Right ventricle myocardium inferior (tissue), 1 donor: ENCODE measurements at regions of chr1 and their contacts with region 1.

Region 1: DNA sequence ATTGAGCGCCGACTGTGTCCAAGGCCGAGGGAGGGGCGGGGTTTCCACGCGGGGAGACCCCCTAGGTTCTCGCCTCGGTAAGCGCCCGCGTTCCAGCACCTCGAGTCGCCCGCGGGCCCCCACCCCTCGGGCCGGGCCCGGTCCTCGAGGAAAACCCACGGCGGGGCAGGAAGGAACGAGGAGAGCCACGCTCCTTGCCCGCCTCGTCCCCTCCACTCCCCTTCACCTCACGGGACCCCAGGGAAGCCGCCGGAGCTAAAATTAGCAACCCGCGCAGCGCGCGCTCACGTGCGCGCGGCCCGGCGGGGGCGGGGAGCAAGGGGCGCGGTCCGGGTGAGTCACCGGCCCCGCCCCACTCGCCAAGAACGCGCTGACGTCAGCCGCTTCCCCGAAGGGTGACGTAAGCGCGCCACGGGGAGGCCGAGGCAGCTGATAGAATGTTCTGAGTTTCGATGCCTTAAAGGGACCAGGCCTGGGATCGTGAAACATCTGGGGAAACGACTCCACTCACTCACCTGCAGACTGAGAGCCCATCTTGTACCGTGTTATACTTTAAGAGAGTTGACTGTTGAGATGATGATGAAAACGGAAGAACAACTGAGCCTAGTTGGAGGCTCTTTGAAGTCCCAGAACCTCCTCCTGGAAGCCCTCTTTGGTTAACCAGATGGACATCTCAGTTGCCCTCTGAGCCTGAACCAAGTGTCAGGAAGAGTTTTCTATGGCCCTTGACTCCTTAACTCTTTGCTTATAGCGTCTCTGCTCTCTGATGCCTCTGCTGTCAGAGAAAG is 49.7 kb upstream of the ATF3 start:
- DNase-seq: peak; percentile 96
- ATAC-seq: peak; percentile 96

Region 2: GRCh38 chr1:212488397-212489283 is 70.2 kb before region 1 on chr1:
- intact Hi-C with region 1: loop called (anchors 5 kb)
- DNase-seq: no peak
- ATAC-seq: peak; percentile 69

Region 3: DNA sequence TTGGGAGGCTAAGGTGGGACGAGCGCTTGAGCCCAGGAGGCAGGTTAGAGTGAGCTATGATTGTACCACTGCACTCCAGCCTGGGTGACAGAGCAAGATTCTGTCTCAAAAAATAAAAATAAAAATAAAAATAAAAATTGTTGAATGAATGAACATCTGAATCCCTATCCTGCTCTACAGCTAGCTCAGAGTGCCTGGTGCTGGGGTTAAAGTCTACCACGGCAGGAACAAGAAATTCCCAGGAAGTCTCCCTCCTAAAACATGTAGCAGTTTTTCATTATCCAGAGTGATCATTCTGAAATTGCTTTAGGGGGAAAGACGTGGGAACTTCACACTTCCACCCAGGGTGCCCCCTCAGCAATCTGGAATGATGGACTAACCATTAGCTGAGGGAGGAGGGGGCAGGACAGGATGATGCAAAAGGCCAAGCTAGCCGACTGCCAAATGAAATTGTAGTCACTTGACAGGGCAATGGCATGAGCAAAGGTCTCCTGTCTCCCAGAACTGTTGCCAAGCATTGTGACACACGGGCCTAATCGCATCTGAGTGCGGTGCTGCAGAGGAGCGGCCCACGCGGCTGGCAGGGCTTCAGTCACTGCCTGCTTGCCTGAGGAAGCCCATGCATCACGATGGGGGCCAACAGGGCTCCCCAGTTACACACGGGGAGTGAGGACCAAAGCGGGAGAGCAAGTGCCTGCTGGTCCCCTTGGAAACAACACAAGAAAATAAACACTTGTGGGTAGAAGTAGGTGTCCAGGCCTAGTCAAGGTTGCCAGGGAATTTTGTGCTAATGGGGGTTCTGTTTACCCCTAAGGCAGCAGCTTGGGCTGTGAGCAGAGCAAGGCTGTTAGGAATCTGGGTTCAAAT is 40.5 kb before region 1 on chr1:
- intact Hi-C with region 1: loop called (anchors 5 kb)
- DNase-seq: peak; percentile 80
- ATAC-seq: peak; percentile 92

Region 4: DNA sequence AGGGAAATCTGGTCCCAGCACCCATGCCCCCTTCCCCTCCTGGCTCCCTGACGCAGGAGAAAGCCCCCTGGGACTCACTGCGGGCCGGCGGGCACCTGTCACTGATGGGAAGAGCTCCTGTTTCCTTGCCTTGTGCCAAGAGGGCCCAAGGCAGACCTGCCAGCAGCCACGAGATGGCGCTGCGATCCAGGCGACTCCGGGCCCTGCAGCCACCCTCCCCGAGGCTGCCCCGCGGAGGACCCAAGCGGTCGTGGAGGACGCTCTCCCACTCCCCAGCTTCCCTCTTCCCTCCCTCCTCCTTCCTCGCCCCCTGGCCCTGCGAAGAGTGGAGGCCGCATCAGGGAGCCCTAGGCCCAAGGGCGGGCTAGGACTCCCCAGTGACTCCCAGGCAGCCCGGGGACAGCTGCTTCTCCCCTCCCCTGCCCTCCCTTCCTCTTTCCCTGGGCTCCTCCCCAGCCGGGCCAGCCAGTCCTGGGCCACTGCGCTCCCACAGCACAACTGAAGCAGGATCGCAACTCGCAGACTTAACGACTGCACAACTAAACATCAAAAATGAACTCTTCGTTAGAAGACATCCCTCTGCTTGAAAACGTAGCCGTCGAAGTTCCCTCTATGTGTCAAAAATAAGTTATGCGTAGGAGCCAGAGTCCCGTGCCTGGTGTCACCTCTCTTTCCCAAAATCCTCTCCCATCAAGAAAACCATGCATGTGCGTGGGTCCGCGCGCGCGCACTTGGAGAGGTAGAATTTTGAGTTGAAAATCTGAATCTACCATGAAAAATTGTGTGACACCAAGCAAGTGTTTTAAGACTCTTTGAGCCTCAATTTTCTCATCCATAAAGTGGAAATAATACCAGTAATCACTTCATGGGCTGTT is 106.6 kb after region 1 on chr1:
- intact Hi-C with region 1: loop called (anchors 5 kb)
- DNase-seq: peak; percentile 93
- ATAC-seq: peak; percentile 98